ENCODE measurements at regions of chr5 and their contacts with region 1.

Region 1: GRCh38 chr5:132103332-132103951 is 29.9 kb downstream of the CSF2 start:
- DNase-seq: peak in 8 of 9 donors; percentile 49 to 82 (median 72)
- ATAC-seq: peak; percentile 92
- H3K4me3 ChIP-seq: peak overlapping the region; percentile 0
- H3K4me3 Mint-ChIP-seq: peak overlapping the region in 9 of 10 donors; percentile 16 to 74 (median 56)
- H3K27ac ChIP-seq: no peak overlapping the region
- H3K27ac Mint-ChIP-seq: peak overlapping the region in 8 of 9 donors; percentile 14 to 86 (median 64)
- H3K4me1 ChIP-seq: peaks cover 40 to 72% of the 10 kb centered on the region in 2 donors
- H3K4me1 Mint-ChIP-seq: peaks cover 42 to 86% (median 51%) of the 10 kb centered on the region in 7 donors
- H3K27me3 ChIP-seq: no peaks in the 10 kb centered on the region
- H3K27me3 Mint-ChIP-seq: no peaks in the 10 kb centered on the region

Region 2: DNA sequence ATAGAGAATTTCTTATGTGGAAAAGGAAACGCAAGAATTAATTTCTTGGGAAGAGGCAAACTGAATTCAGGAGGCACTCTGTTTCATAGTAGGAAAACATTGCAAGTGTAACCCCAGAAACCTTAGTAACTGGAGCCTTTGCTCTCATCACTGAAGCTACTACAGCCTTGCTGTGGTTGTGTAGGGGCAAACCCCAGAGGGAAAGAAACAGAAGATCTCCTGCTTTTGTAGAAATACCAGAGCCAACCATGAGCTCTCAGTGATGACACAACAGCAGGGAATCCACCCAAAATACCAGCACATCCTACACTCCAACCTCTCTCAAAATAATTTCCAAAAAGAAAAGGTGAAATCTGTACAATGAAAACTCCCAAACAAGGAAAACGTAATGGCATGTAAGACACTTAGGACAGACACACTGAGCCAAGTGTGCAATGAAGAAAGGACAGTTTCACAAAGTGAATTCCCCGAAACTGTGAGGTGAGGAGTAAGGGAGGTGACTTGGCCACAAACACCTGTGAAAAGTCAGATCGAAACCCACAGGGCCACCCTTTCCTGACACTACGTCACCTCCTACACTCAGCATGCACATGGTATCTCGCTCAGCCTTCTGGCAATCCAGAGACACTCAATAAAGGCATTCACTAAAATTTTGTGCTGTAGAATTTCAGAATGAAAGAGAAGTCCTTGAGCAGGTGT is 83.4 kb before region 1 on chr5:
- CTCF ChIA-PET with region 1: no interaction called
- POLR2A ChIA-PET with region 1: no interaction called
- intact Hi-C with region 1: loop called in 1 of 2 experiments (anchors 1 kb)
- DNase-seq: peak in 8 of 9 donors; percentile 37 to 75 (median 57)
- ATAC-seq: peak; percentile 95
- H3K4me3 ChIP-seq: no peak overlapping the region
- H3K4me3 Mint-ChIP-seq: peak overlapping the region in 7 of 10 donors; percentile 35 to 81 (median 53)
- H3K27ac ChIP-seq: peak overlapping the region; percentile 46
- H3K27ac Mint-ChIP-seq: peak overlapping the region; percentile 38 to 95 (median 69)
- H3K4me1 ChIP-seq: peaks cover 19 to 24% of the 10 kb centered on the region in 2 donors
- H3K4me1 Mint-ChIP-seq: peaks cover 10 to 54% (median 43%) of the 10 kb centered on the region in 7 donors
- H3K27me3 ChIP-seq: no peaks in the 10 kb centered on the region
- H3K27me3 Mint-ChIP-seq: peaks cover 0 to 45% (median 0%) of the 10 kb centered on the region in 5 donors

Region 3: DNA sequence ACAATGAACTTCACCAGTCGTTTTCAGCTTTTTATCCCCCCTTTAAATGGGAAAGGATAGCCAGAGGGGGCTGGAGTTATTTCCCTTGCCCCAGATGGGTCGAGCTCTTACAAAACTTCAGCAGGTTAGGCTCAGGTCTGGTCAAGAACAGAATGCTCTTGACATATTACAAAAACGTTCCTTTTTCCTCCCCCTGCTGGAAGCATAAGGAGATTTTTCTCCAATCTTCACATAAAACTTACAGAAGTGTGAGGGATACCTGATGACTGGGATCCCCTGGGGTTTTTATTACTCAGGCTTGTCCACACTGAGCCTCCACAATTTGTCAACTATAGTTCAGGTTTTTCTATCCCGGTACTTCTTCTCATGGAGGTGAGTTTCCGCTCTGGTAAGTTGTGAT is 30.9 kb after region 1 on chr5:
- CTCF ChIA-PET with region 1: no interaction called
- POLR2A ChIA-PET with region 1: no interaction called
- intact Hi-C with region 1: loop called in 1 of 2 experiments (anchors 1 kb)
- DNase-seq: peak in 2 of 9 donors; percentile 4 to 7
- ATAC-seq: no peak
- H3K4me3 ChIP-seq: no peak overlapping the region
- H3K4me3 Mint-ChIP-seq: no peak overlapping the region
- H3K27ac ChIP-seq: no peak overlapping the region
- H3K27ac Mint-ChIP-seq: no peak overlapping the region
- H3K4me1 ChIP-seq: no peaks in the 10 kb centered on the region
- H3K4me1 Mint-ChIP-seq: peaks cover 0 to 10% (median 0%) of the 10 kb centered on the region in 7 donors
- H3K27me3 ChIP-seq: no peaks in the 10 kb centered on the region
- H3K27me3 Mint-ChIP-seq: peaks cover 15 to 65% (median 37%) of the 10 kb centered on the region in 5 donors

Region 4: GRCh38 chr5:132495667-132496190 is 392.3 kb after region 1 on chr5:
- CTCF ChIA-PET with region 1: no interaction called
- POLR2A ChIA-PET with region 1: no interaction called
- intact Hi-C with region 1: loop called in 1 of 2 experiments (anchors 5 kb)
- DNase-seq: peak in 7 of 9 donors; percentile 42 to 79 (median 54)
- ATAC-seq: peak; percentile 48
- H3K4me3 ChIP-seq: peak overlapping the region; percentile 91
- H3K4me3 Mint-ChIP-seq: peak overlapping the region; percentile 86 to 99 (median 97)
- H3K27ac ChIP-seq: peak overlapping the region; percentile 99
- H3K27ac Mint-ChIP-seq: peak overlapping the region; percentile 90 to 99 (median 97)
- H3K4me1 ChIP-seq: peaks cover 48 to 57% of the 10 kb centered on the region in 2 donors
- H3K4me1 Mint-ChIP-seq: peaks cover 36 to 79% (median 68%) of the 10 kb centered on the region in 7 donors
- H3K27me3 ChIP-seq: no peaks in the 10 kb centered on the region
- H3K27me3 Mint-ChIP-seq: no peaks in the 10 kb centered on the region

Measured in naive thymus-derived CD4-positive, alpha-beta T cell (primary cell).